Heart left ventricle (tissue), 16 donors: ENCODE measurements at regions of chr2 and their contacts with region 1.

Region 1: DNA sequence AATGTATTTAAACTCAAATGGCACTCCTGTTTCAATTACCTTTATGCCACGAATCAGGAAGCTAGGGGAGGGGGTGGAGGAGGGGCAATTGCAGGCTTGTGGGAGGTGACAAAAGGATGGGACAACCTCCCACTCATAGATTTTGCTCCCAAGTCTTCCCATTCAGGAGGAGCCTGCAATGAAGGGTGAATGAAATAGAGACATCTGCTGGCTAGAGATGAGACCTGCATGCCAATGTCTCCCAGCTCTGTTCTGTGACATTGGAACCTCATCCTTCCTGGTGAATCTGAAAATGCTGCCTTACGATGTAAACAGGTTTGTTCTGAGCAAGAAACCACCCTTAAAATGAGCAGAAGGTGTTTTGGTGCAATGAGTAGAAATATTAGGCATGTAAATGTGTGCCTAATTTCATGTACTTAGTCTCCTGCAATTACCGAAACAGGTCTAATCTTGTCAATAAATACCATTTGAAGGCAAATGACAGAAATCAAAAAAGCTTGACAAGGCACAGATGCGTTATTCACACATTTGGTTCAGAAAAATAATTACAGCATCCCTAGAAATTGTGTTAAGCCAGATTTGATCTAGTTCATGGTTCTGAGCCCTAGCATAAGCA is 2.7 kb upstream of the PID1 start:
- DNase-seq: peak in 3 of 5 donors; percentile 37 to 49 (median 40)
- ATAC-seq: peak; percentile 53 to 85 (median 82)
- H3K4me3 ChIP-seq: peak overlapping the region in 8 of 12 donors; percentile 21 to 45 (median 39)
- H3K27ac ChIP-seq: no peak overlapping the region
- H3K4me1 ChIP-seq: peaks cover 0 to 13% (median 0%) of the 10 kb centered on the region in 12 donors
- H3K27me3 ChIP-seq: peaks cover 0 to 5% (median 0%) of the 10 kb centered on the region in 9 donors
- CTCF ChIP-seq: peak; percentile 58 to 85 (median 72)
- POLR2A ChIP-seq: no peak

Region 2: GRCh38 chr2:227884511-227884947 is 1389.3 kb before region 1 on chr2:
- intact Hi-C with region 1: loop called in 1 of 10 experiments (anchors 10 kb)
- DNase-seq: peak; percentile 30 to 77 (median 48)
- ATAC-seq: peak in 3 of 4 donors; percentile 66 to 80 (median 70)
- H3K4me3 ChIP-seq: no peak overlapping the region
- H3K27ac ChIP-seq: no peak overlapping the region
- H3K4me1 ChIP-seq: no peaks in the 10 kb centered on the region
- H3K27me3 ChIP-seq: no peaks in the 10 kb centered on the region
- CTCF ChIP-seq: peak; percentile 44 to 72 (median 62)
- POLR2A ChIP-seq: no peak

Region 3: DNA sequence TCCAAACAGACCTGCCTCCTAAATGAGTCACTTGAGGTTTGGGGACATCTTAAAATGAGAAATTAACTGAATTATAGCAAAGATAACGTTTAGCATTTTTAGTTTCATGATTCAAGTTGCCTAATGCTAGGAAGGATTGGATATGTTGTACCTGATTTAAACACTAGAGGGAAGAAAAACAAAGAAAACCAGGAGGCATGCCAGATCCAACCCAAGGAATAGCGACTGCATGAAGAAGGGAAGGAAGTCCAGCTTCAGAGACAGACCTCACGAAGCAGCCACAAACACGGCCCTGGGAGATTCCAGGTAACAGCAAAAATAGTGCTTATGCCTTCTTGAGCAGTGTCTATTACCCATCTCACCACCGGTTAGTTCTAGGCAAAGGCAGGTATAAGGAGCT is 592.4 kb before region 1 on chr2:
- intact Hi-C with region 1: loop called in 1 of 10 experiments (anchors 5 kb)
- DNase-seq: no peak
- ATAC-seq: peak in 3 of 4 donors; percentile 15 to 69 (median 44)
- H3K4me3 ChIP-seq: no peak overlapping the region
- H3K27ac ChIP-seq: no peak overlapping the region
- H3K4me1 ChIP-seq: peaks cover 0 to 5% (median 0%) of the 10 kb centered on the region in 12 donors
- H3K27me3 ChIP-seq: no peaks in the 10 kb centered on the region
- CTCF ChIP-seq: peak in 11 of 12 donors; percentile 3 to 58 (median 47)
- POLR2A ChIP-seq: no peak

Region 4: DNA sequence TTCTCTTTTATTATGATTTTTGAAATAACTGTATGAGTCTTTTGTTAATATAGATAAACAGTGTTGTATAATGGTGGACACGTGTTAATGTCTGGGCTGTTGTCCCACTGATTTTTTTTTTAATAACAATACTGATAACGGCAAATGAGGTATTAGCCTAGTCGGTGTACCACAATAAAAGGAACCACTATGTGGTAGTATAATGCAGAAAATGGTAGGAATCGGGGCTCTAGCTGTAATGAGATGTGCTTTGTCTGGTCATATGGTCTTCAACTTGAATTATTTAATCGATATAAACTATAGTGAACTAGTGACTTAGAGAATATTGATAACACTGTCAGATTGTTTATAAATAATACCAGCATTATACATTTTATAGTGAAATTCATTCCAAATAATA is 574.4 kb before region 1 on chr2:
- intact Hi-C with region 1: loop called in 9 of 10 experiments (anchors 1 to 5 kb)
- DNase-seq: no peak
- ATAC-seq: peak; percentile 37 to 81 (median 58)
- H3K4me3 ChIP-seq: no peak overlapping the region
- H3K27ac ChIP-seq: no peak overlapping the region
- H3K4me1 ChIP-seq: no peaks in the 10 kb centered on the region
- H3K27me3 ChIP-seq: no peaks in the 10 kb centered on the region
- CTCF ChIP-seq: peak in 10 of 12 donors; percentile 16 to 54 (median 38)
- POLR2A ChIP-seq: no peak

Region 5: DNA sequence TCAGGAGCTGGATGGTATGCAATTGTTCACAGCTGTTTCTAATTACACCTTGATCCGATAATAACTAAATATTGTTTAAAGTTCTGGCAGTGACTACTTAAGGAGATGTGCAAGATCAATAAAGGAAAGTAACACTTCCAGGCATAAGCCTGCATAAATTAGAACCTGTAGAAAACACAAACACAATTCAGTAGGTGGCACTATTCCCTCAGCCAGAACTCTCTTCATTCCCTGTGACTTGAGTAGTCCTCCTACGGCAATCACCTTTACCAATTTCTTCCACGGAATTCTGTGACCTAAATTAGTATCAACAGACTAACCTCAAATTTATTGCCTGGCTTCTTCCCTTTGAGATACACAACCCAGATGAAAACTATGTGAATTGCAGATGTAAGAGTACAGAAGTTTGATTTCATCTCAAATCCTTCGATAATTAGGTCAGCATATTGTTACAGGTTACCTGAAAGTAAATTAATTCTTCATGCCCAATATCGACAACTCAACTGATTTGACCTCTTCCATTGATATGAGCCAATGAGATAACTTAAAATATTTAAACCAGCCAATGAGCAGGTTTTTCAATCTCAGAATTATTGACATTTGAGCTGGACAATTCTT is 140.6 kb before region 1 on chr2:
- intact Hi-C with region 1: loop called (anchors 1 to 10 kb)
- DNase-seq: no peak
- ATAC-seq: peak in 2 of 4 donors; percentile 56 to 61
- H3K4me3 ChIP-seq: no peak overlapping the region
- H3K27ac ChIP-seq: no peak overlapping the region
- H3K4me1 ChIP-seq: peaks cover 0 to 12% (median 0%) of the 10 kb centered on the region in 12 donors
- H3K27me3 ChIP-seq: no peaks in the 10 kb centered on the region
- CTCF ChIP-seq: peak; percentile 21 to 57 (median 47)
- POLR2A ChIP-seq: no peak

Region 6: GRCh38 chr2:229344151-229344551 is 70.3 kb after region 1 on chr2:
- intact Hi-C with region 1: no loop called
- DNase-seq: no peak
- ATAC-seq: peak in 1 of 4 donors; percentile 18
- H3K4me3 ChIP-seq: no peak overlapping the region
- H3K27ac ChIP-seq: no peak overlapping the region
- H3K4me1 ChIP-seq: peaks cover 0 to 5% (median 0%) of the 10 kb centered on the region in 12 donors
- H3K27me3 ChIP-seq: peaks cover 0 to 5% (median 0%) of the 10 kb centered on the region in 9 donors
- CTCF ChIP-seq: no peak
- POLR2A ChIP-seq: no peak

Region 7: GRCh38 chr2:229642371-229642770 is 368.5 kb after region 1 on chr2:
- intact Hi-C with region 1: no loop called
- DNase-seq: no peak
- ATAC-seq: no peak
- H3K4me3 ChIP-seq: no peak overlapping the region
- H3K27ac ChIP-seq: no peak overlapping the region
- H3K4me1 ChIP-seq: no peaks in the 10 kb centered on the region
- H3K27me3 ChIP-seq: peaks cover 0 to 2% (median 0%) of the 10 kb centered on the region in 9 donors
- CTCF ChIP-seq: no peak
- POLR2A ChIP-seq: no peak